ENCODE measurements at regions of chr9 and their contacts with region 1.

Region 1: GRCh38 chr9:134178768-134179551 is 14.6 kb upstream of the RNU6ATAC start:
- DNase-seq: no peak
- ATAC-seq: 0 out of 2 replicates have a peak, but pooled peaks have one; percentile 10
- H3K4me3 ChIP-seq: no peak overlapping the region
- H3K27ac ChIP-seq: no peak overlapping the region
- H3K4me1 ChIP-seq: no peaks in the 10 kb centered on the region
- H3K27me3 ChIP-seq: no peaks in the 10 kb centered on the region; the same call in 1 of the 2 replicates
- CTCF ChIP-seq: no peak

Region 2: GRCh38 chr9:134195558-134195957 is 16.6 kb after region 1 on chr9:
- CTCF ChIA-PET with region 1: no interaction called
- POLR2A ChIA-PET with region 1: interaction called, 11 read pairs
- in situ Hi-C with region 1: no loop called
- intact Hi-C with region 1: no loop called
- DNase-seq: no peak
- ATAC-seq: no peak
- H3K4me3 ChIP-seq: no peak overlapping the region
- H3K27ac ChIP-seq: no peak overlapping the region
- H3K4me1 ChIP-seq: no peaks in the 10 kb centered on the region
- H3K27me3 ChIP-seq: no peaks in the 10 kb centered on the region
- CTCF ChIP-seq: no peak

Region 3: GRCh38 chr9:134325817-134326723 is 147.1 kb after region 1 on chr9 and contains the start of gene RXRA:
- CTCF ChIA-PET with region 1: no interaction called
- POLR2A ChIA-PET with region 1: no interaction called
- in situ Hi-C with region 1: no loop called
- intact Hi-C with region 1: loop called (anchors 10 kb)
- DNase-seq: no peak
- ATAC-seq: peak; percentile 67
- H3K4me3 ChIP-seq: peak within 1 kb of the TSS; percentile 56 to 71
- H3K27ac ChIP-seq: peak within 1 kb of the TSS; percentile 84
- H3K4me1 ChIP-seq: peaks cover 23% of the 10 kb centered on the region
- H3K27me3 ChIP-seq: no peaks in the 10 kb centered on the region
- CTCF ChIP-seq: no peak
- total RNA-seq, gene RXRA: 31.6 TPM

Measured in Panc1 (cell line).